A673 (cell line): ENCODE measurements at regions of chr5 and their contacts with region 1.

Region 1: GRCh38 chr5:54844905-54845566 is 140.4 kb downstream of the ESM1 start:
- DNase-seq: peak; percentile 83
- H3K4me3 ChIP-seq: peak overlapping the region; percentile 25
- H3K27ac ChIP-seq: peak overlapping the region; percentile 82
- H3K4me1 ChIP-seq: peaks cover 66% of the 10 kb centered on the region
- H3K27me3 ChIP-seq: no peaks in the 10 kb centered on the region
- CTCF ChIP-seq: peak; percentile 76

Region 2: GRCh38 chr5:54646356-54647101 is 198.5 kb before region 1 on chr5:
- CTCF ChIA-PET with region 1: no interaction called
- POLR2A ChIA-PET with region 1: no interaction called
- intact Hi-C with region 1: loop called (anchors 5 kb)
- DNase-seq: peak; percentile 96
- H3K4me3 ChIP-seq: no peak overlapping the region
- H3K27ac ChIP-seq: peak overlapping the region; percentile 75
- H3K4me1 ChIP-seq: peaks cover 64% of the 10 kb centered on the region
- H3K27me3 ChIP-seq: no peaks in the 10 kb centered on the region
- CTCF ChIP-seq: no peak

Region 3: DNA sequence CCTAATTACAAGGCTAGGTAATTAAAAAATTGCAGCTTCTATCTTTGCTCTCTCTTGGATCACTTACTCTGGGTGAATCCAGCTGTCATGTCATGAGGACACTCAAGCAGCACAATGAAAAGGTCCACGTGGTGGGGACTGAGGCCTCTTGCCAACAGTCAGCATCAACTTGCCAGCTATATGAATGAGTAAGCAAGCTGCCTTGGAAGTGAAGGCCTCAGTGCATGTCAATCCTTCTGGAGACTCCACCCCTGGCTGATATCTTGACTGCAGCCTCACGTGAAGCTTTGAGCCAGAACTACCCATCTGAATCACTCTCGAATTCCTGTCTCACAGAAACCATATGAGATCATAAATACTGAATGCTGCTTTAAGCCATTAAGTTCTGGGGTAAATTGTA is 187.0 kb before region 1 on chr5:
- CTCF ChIA-PET with region 1: interaction called, 4 read pairs
- POLR2A ChIA-PET with region 1: no interaction called
- intact Hi-C with region 1: loop called (anchors 5 kb)
- DNase-seq: peak; percentile 85
- H3K4me3 ChIP-seq: no peak overlapping the region
- H3K27ac ChIP-seq: no peak overlapping the region
- H3K4me1 ChIP-seq: peaks cover 34% of the 10 kb centered on the region
- H3K27me3 ChIP-seq: no peaks in the 10 kb centered on the region
- CTCF ChIP-seq: no peak

Region 4: DNA sequence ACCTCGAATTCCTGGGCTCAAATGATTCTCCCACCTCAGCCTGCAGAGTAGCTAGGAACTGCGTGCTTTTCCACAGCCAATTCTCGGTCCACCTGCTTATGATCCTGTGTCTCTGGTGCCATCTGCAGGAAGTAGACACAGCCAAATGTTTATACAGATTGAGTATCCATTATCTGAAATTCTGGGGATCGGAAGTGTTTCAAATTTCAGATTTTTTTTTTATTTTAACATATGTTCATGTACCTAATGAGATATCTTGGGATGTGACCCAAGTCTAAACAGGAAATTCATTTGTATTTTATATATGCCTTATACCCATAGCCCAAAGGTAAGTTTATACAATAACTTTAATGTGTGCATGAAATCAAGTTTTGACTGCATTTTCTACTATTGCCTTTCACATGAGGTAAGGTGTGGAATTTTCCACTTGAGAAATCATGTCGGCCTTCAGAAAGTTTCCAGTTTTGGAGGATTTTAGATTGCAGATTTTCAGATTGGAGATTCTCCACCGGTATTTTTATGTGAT is 50.8 kb after region 1 on chr5:
- CTCF ChIA-PET with region 1: no interaction called
- POLR2A ChIA-PET with region 1: no interaction called
- intact Hi-C with region 1: loop called (anchors 5 kb)
- DNase-seq: peak; percentile 86
- H3K4me3 ChIP-seq: no peak overlapping the region
- H3K27ac ChIP-seq: peak overlapping the region; percentile 74
- H3K4me1 ChIP-seq: peaks cover 16% of the 10 kb centered on the region
- H3K27me3 ChIP-seq: no peaks in the 10 kb centered on the region
- CTCF ChIP-seq: peak; percentile 78